CD8-positive, alpha-beta memory T cell (primary cell): ENCODE measurements at regions of chr2 and their contacts with region 1.

Region 1: DNA sequence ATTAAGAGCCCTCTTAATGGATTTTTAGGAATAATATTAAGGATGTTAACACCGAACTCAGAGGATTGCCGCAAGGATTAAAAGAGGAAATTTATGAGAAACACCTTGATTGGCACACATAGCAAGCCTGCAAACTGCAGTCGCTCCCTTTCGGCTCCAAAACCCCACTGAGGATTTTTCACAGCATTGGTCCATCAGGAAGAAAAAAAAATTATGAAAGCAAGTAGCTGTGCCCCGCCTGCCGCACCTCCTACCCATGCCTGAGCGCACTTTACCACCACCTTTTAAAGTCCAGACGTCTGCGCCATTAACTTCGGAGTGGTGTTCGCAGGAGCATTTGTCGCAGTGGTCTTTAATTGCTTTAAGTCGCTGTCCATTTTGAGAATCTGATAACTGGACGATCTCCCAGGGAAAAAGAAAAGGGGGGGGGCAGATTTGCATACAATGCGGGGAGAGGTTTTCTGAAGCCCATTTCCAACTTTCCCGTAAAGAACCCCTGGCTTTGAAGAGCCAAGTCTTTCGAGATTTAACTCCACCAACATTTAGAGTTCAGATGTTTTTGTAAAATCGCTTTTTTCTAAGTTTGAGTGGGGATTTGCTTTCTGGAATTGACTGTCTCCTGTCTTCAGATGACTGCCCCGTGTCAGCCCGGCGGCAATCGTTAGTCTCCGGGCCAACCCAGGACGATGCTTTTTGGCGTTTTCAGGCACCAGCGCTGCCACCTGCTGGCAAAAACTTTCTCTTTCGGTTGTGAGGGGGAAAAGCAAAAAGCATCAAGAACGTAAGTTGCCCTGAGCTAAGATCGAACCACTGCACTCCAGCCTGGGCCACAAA is 914 bp upstream of the TRABD2A start:
- DNase-seq: peak; percentile 71 to 88 (median 76)
- H3K4me3 ChIP-seq: peak overlapping the region; percentile 68
- H3K4me3 Mint-ChIP-seq: peak overlapping the region; percentile 90 to 99 (median 95)
- H3K27ac ChIP-seq: peak overlapping the region; percentile 58
- H3K27ac Mint-ChIP-seq: peak overlapping the region; percentile 74 to 98 (median 95)
- H3K4me1 ChIP-seq: peaks cover 32% of the 10 kb centered on the region
- H3K4me1 Mint-ChIP-seq: peaks cover 34 to 60% (median 44%) of the 10 kb centered on the region in 3 donors
- H3K27me3 ChIP-seq: no peaks in the 10 kb centered on the region
- H3K27me3 Mint-ChIP-seq: peaks cover 0 to 3% of the 10 kb centered on the region in 2 donors

Region 2: GRCh38 chr2:84498150-84498799 is 383.5 kb before region 1 on chr2:
- CTCF ChIA-PET with region 1: interaction called, 16 read pairs
- POLR2A ChIA-PET with region 1: no interaction called
- DNase-seq: no peak
- H3K4me3 ChIP-seq: no peak overlapping the region
- H3K4me3 Mint-ChIP-seq: no peak overlapping the region
- H3K27ac ChIP-seq: no peak overlapping the region
- H3K27ac Mint-ChIP-seq: peak overlapping the region in 4 of 8 donors; percentile 7 to 63 (median 26)
- H3K4me1 ChIP-seq: peaks cover 11% of the 10 kb centered on the region
- H3K4me1 Mint-ChIP-seq: peaks cover 6 to 8% (median 6%) of the 10 kb centered on the region in 3 donors
- H3K27me3 ChIP-seq: no peaks in the 10 kb centered on the region
- H3K27me3 Mint-ChIP-seq: peaks cover 3 to 11% of the 10 kb centered on the region in 2 donors

Region 3: GRCh38 chr2:84741296-84741765 is 140.5 kb before region 1 on chr2:
- CTCF ChIA-PET with region 1: interaction called, 32 read pairs
- POLR2A ChIA-PET with region 1: interaction called, 7 read pairs
- DNase-seq: peak; percentile 17 to 71 (median 52)
- H3K4me3 ChIP-seq: no peak overlapping the region
- H3K4me3 Mint-ChIP-seq: peak overlapping the region in 2 of 7 donors; percentile 16 to 63
- H3K27ac ChIP-seq: no peak overlapping the region
- H3K27ac Mint-ChIP-seq: peak overlapping the region in 7 of 8 donors; percentile 48 to 79 (median 71)
- H3K4me1 ChIP-seq: peaks cover 20% of the 10 kb centered on the region
- H3K4me1 Mint-ChIP-seq: peaks cover 26 to 34% (median 26%) of the 10 kb centered on the region in 3 donors
- H3K27me3 ChIP-seq: no peaks in the 10 kb centered on the region
- H3K27me3 Mint-ChIP-seq: no peaks in the 10 kb centered on the region

Region 4: GRCh38 chr2:84865181-84865783 is 16.5 kb before region 1 on chr2:
- CTCF ChIA-PET with region 1: interaction called, 11 read pairs
- POLR2A ChIA-PET with region 1: interaction called, 5 read pairs
- DNase-seq: peak in 2 of 5 donors; percentile 50 to 58
- H3K4me3 ChIP-seq: no peak overlapping the region
- H3K4me3 Mint-ChIP-seq: peak overlapping the region in 2 of 7 donors; percentile 8 to 66
- H3K27ac ChIP-seq: no peak overlapping the region
- H3K27ac Mint-ChIP-seq: peak overlapping the region; percentile 41 to 88 (median 70)
- H3K4me1 ChIP-seq: peaks cover 72% of the 10 kb centered on the region
- H3K4me1 Mint-ChIP-seq: peaks cover 54 to 82% (median 63%) of the 10 kb centered on the region in 3 donors
- H3K27me3 ChIP-seq: no peaks in the 10 kb centered on the region
- H3K27me3 Mint-ChIP-seq: no peaks in the 10 kb centered on the region

Region 5: GRCh38 chr2:84894758-84895520 is 13.1 kb after region 1 on chr2:
- CTCF ChIA-PET with region 1: interaction called, 26 read pairs
- POLR2A ChIA-PET with region 1: interaction called, 5 read pairs
- DNase-seq: peak in 1 of 5 donors; percentile 54
- H3K4me3 ChIP-seq: peak overlapping the region; percentile 7
- H3K4me3 Mint-ChIP-seq: peak overlapping the region in 6 of 7 donors; percentile 32 to 74 (median 34)
- H3K27ac ChIP-seq: no peak overlapping the region
- H3K27ac Mint-ChIP-seq: peak overlapping the region; percentile 12 to 98 (median 85)
- H3K4me1 ChIP-seq: peaks cover 53% of the 10 kb centered on the region
- H3K4me1 Mint-ChIP-seq: peaks cover 48 to 70% (median 61%) of the 10 kb centered on the region in 3 donors
- H3K27me3 ChIP-seq: no peaks in the 10 kb centered on the region
- H3K27me3 Mint-ChIP-seq: no peaks in the 10 kb centered on the region

Region 6: DNA sequence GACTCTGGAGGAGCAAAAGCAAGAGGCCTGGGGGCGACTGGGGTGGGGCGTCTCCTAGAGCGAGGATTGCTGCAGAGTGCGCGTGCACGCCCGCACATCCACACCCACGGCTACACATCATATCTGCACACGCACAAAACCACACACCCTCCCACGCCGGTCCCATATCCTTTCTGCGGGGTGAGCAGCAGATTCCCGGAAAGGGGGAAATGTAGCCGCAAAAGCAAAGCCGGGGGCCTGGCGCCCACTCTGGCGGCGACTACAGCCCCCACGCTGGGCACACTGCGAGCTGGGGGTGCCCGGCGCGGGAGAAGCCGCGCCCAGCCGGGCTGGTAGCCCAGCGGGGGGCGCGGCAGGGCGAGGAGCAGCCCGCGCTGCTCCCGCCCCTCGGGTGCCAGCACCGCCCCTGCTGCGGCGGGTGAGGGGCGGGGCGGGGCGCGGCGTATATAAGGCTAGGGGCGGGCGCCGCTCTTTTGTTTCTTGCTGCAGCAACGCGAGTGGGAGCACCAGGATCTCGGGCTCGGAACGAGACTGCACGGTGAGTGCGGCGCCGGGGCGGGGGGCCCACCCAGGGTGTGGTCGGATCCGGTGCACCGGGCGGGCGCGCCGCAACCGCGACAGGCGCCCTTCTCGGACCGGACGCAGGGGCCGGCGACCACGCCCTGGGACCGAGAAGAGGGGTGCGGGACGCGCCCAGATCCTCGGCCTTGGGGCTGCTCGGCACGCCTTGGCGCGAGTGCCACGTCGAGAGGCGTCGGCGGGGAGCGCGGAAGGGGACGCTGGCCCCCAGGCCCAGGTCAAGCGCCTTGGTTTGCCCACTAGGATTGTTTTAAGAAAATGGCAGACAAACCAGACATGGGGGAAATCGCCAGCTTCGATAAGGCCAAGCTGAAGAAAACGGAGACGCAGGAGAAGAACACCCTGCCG is 23.6 kb after region 1 on chr2 and contains the start of gene TMSB10:
- CTCF ChIA-PET with region 1: interaction called, 59 read pairs
- POLR2A ChIA-PET with region 1: interaction called, 54 read pairs
- DNase-seq: peak; percentile 80 to 95 (median 91)
- H3K4me3 ChIP-seq: peak within 1 kb of the TSS; percentile 92
- H3K4me3 Mint-ChIP-seq: peak within 1 kb of the TSS; percentile 91 to 97 (median 96)
- H3K27ac ChIP-seq: peak within 1 kb of the TSS; percentile 73
- H3K27ac Mint-ChIP-seq: peak within 1 kb of the TSS; percentile 91 to 98 (median 94)
- H3K4me1 ChIP-seq: peaks cover 32% of the 10 kb centered on the region
- H3K4me1 Mint-ChIP-seq: peaks cover 51 to 64% (median 62%) of the 10 kb centered on the region in 3 donors
- H3K27me3 ChIP-seq: no peaks in the 10 kb centered on the region
- H3K27me3 Mint-ChIP-seq: peaks cover 0 to 5% of the 10 kb centered on the region in 2 donors
- total RNA-seq, gene TMSB10: 1,121 to 1,125 TPM

Region 7: DNA sequence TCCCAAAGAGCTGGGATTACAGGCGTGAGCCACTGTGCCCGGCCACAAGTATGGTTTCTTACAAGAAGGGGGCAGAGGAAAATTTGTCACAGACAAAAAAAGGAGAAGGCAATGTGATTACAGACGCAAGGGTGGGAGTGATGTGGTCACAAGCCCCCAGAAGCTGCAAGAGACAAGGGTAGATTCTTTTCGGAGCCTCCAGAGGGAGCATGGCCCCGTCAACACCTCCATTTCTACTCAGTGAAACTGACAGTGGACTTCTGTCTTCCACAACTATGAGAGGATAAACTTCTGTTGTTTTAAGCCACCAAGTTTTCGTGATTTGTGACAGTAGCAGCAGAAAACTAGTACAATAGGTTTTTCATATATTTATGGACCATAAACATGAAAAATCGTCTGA is 249.3 kb after region 1 on chr2:
- CTCF ChIA-PET with region 1: no interaction called
- POLR2A ChIA-PET with region 1: no interaction called
- DNase-seq: no peak
- H3K4me3 ChIP-seq: no peak overlapping the region
- H3K4me3 Mint-ChIP-seq: no peak overlapping the region
- H3K27ac ChIP-seq: no peak overlapping the region
- H3K27ac Mint-ChIP-seq: no peak overlapping the region
- H3K4me1 ChIP-seq: peaks cover 6% of the 10 kb centered on the region
- H3K4me1 Mint-ChIP-seq: peaks cover 2 to 19% (median 8%) of the 10 kb centered on the region in 3 donors
- H3K27me3 ChIP-seq: peaks cover 12% of the 10 kb centered on the region
- H3K27me3 Mint-ChIP-seq: peaks cover 47 to 59% of the 10 kb centered on the region in 2 donors